ENCODE measurements at regions of chr10 and their contacts with region 1.

Region 1: GRCh38 chr10:102009801-102010425 is 46.1 kb downstream of the ARMH3 start:
- DNase-seq: peak; percentile 93
- ATAC-seq: peak; percentile 100
- H3K4me3 ChIP-seq: no peak overlapping the region
- H3K27ac ChIP-seq: no peak overlapping the region
- H3K4me1 ChIP-seq: no peaks in the 10 kb centered on the region
- H3K27me3 ChIP-seq: no peaks in the 10 kb centered on the region
- CTCF ChIP-seq: peak; percentile 99; the same call in 1 of the 2 replicates
- POLR2A ChIP-seq: peak; percentile 53; the same call in 1 of the 2 replicates
- RAD21 ChIP-seq: peak; percentile 100

Region 2: GRCh38 chr10:101330631-101331225 is 679.2 kb before region 1 on chr10:
- CTCF ChIA-PET with region 1: no interaction called
- POLR2A ChIA-PET with region 1: no interaction called
- dilution Hi-C with region 1: no loop called
- in situ Hi-C with region 1: no loop called
- intact Hi-C with region 1: no loop called
- DNase-seq: peak; percentile 80
- ATAC-seq: no peak
- H3K4me3 ChIP-seq: no peak overlapping the region
- H3K27ac ChIP-seq: no peak overlapping the region
- H3K4me1 ChIP-seq: peaks cover 2% of the 10 kb centered on the region; the same call in 1 of the 2 replicates
- H3K27me3 ChIP-seq: peaks cover 45% of the 10 kb centered on the region
- CTCF ChIP-seq: no peak
- POLR2A ChIP-seq: no peak
- RAD21 ChIP-seq: no peak

Region 3: GRCh38 chr10:101879456-101880231 is 130.3 kb before region 1 on chr10:
- CTCF ChIA-PET with region 1: interaction called, 10 read pairs
- POLR2A ChIA-PET with region 1: no interaction called
- dilution Hi-C with region 1: no loop called
- in situ Hi-C with region 1: loop called (anchors 10 kb)
- intact Hi-C with region 1: no loop called
- DNase-seq: peak; percentile 97
- ATAC-seq: peak; percentile 79
- H3K4me3 ChIP-seq: no peak overlapping the region
- H3K27ac ChIP-seq: peak overlapping the region; percentile 81
- H3K4me1 ChIP-seq: peaks cover 13% of the 10 kb centered on the region
- H3K27me3 ChIP-seq: no peaks in the 10 kb centered on the region
- CTCF ChIP-seq: no peak
- POLR2A ChIP-seq: no peak
- RAD21 ChIP-seq: no peak

Region 4: DNA sequence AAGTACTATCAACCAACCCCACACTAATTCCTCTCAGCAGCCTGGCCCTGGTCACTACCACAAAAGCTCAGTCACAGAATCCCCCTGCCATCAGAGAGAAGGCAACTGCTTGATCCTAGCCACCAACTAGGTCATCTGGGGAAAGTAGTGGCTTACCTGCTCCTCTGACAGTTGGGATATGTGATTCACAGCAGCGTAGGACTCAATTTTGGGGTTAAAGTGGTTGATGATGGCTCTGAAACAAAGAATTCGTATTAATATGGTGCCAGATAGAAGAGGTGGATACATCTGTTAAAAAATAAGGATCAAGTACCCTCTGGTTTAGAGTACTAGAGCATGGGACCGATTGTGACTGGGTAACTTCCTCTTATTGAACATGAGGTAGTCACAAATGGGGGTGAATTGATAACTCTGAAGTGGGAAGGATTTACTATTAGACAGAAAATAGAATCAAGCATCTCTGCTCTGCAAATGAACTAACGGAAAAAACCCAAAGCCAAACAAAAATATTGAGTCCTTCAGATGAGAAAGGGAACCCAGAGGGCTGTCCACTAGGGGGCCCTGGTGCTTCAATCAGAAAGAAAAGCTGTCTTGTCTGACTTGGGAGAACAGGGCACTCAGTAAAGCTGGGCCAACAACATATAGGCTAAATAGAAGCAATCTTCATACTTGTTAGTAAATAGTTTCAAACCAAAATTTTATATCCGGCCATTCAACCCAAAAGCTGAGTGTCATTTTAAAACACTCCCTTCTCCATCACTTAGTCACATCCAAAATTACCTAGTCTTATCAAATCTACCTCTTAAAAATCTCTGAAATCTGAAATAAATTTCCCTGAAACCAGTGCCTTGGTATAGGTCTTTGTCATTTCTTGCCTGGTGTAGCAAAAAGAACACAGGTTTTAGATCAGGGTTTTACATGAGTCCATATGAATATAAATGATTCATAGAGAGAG is 120.4 kb before region 1 on chr10:
- CTCF ChIA-PET with region 1: interaction called, 22 read pairs
- POLR2A ChIA-PET with region 1: no interaction called
- dilution Hi-C with region 1: no loop called
- in situ Hi-C with region 1: loop called (anchors 10 kb)
- intact Hi-C with region 1: loop called (anchors 1 kb)
- DNase-seq: peak; percentile 78
- ATAC-seq: peak; percentile 97
- H3K4me3 ChIP-seq: no peak overlapping the region
- H3K27ac ChIP-seq: no peak overlapping the region
- H3K4me1 ChIP-seq: no peaks in the 10 kb centered on the region
- H3K27me3 ChIP-seq: no peaks in the 10 kb centered on the region
- CTCF ChIP-seq: peak; percentile 90
- POLR2A ChIP-seq: no peak
- RAD21 ChIP-seq: peak; percentile 87

Region 5: DNA sequence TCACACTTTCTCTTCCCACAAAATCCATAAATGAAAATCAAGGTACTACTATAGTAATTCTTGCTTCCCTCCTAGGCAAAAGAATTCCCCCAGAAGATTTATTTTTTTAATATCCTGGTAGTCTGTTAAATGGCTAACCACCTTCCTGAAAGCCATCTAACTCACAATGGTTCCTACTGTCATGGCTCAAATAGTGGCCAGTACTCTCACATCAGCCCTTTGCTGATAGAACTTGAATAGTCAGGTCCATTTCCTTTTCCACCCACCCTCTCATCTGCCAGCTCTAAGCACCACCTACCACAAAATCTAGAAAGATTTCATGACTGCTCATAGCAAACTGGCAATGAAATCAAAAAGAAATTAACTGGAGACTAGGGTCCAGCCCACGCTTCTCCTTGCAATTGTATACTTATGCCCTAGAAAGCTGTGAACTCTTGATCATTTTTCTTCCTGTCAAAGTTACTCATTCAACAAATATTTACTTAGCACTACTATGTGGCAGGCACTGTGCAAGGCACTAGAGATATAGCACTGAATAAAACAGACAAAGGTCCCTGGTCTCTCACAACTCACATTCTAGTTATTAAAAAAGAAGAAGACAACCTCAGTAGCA is 14.4 kb before region 1 on chr10:
- CTCF ChIA-PET with region 1: interaction called, 14 read pairs
- POLR2A ChIA-PET with region 1: interaction called, 4 read pairs
- dilution Hi-C with region 1: no loop called
- in situ Hi-C with region 1: no loop called
- intact Hi-C with region 1: no loop called
- DNase-seq: peak; percentile 59
- ATAC-seq: peak; percentile 73
- H3K4me3 ChIP-seq: no peak overlapping the region
- H3K27ac ChIP-seq: no peak overlapping the region
- H3K4me1 ChIP-seq: 0 out of 2 replicates have a peak, but pooled peaks cover 2% of the 10 kb centered on the region
- H3K27me3 ChIP-seq: no peaks in the 10 kb centered on the region
- CTCF ChIP-seq: no peak
- POLR2A ChIP-seq: no peak
- RAD21 ChIP-seq: no peak

Measured in IMR-90 (cell line).